Activated naive CD4-positive, alpha-beta T cell treated with anti-CD3 and anti-CD28 coated beads for 36 hours (primary cell): ENCODE measurements at regions of chr12 and their contacts with region 1.

Region 1: GRCh38 chr12:67804168-67804567 is 155.6 kb downstream of the DYRK2 start:
- DNase-seq: peak; percentile 73
- H3K4me3 Mint-ChIP-seq: no peak overlapping the region
- H3K27ac Mint-ChIP-seq: no peak overlapping the region
- H3K4me1 Mint-ChIP-seq: peaks cover 14% of the 10 kb centered on the region
- H3K27me3 Mint-ChIP-seq: no peaks in the 10 kb centered on the region

Region 2: DNA sequence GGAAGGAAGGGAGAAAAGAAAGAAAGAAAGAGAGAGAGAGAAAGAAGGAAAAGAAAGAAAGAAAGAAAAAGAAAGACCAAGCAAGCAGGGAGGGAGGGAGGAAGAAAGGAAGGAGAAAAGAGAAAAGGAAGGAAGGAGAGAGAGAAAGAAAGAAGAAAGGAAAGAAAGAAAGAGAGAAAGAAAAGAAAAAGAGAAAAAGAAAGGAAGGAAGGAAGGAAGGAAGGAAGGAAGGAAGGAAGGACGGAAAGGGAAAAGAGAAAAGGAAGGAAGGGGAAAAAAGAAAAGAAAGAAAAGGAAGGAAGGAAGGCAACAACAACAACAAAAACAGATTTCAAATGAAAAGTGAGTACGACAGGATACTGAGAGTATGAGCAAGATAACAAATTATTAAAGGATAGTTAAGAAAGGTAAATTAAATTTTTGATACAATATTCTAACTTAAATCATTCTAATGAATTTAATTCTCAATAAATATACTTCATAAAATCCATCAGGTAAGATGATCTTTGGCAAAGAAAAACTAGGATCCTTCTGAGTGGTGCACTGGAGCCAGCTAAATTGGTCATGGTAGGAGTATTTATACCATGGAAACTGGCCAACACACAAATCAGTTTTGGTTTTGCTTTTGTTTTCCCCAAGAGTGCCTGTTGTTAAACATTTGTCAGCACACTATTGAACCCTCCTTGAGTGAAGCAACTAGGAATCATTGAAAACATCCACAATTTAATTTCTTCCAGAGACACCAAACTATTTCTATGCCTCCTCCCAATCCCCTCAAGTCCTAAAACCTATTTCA is 211.8 kb before region 1 on chr12:
- CTCF ChIA-PET with region 1: no interaction called
- intact Hi-C with region 1: loop called (anchors 5 kb)
- DNase-seq: peak; percentile 32
- H3K4me3 Mint-ChIP-seq: no peak overlapping the region
- H3K27ac Mint-ChIP-seq: peak overlapping the region; percentile 22
- H3K4me1 Mint-ChIP-seq: peaks cover 49% of the 10 kb centered on the region
- H3K27me3 Mint-ChIP-seq: no peaks in the 10 kb centered on the region

Region 3: DNA sequence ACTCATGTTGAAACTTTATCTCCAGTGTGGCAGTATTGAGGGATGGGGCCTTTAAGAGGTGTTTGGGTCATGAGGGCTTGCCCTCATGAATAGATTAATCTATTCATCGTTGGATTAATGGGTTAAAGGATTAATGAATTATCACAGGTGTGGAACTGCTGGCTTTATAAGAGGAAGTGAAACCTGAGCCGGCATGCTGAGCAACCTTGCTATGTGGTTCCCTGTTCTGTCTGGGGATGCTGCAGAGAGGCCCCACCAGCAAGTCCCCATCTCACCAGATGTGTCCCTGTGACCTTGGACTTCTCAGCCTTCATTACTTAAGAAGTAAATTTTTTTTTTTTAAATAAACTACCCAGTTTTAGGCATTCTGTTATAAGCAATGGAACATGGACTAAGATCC is 46.0 kb before region 1 on chr12:
- CTCF ChIA-PET with region 1: no interaction called
- intact Hi-C with region 1: loop called (anchors 1 kb)
- DNase-seq: peak; percentile 9
- H3K4me3 Mint-ChIP-seq: no peak overlapping the region
- H3K27ac Mint-ChIP-seq: no peak overlapping the region
- H3K4me1 Mint-ChIP-seq: peaks cover 49% of the 10 kb centered on the region
- H3K27me3 Mint-ChIP-seq: no peaks in the 10 kb centered on the region

Region 4: GRCh38 chr12:67827820-67828383 is 23.7 kb after region 1 on chr12:
- CTCF ChIA-PET with region 1: no interaction called
- intact Hi-C with region 1: loop called (anchors 1 kb)
- DNase-seq: peak; percentile 79
- H3K4me3 Mint-ChIP-seq: peak overlapping the region; percentile 30
- H3K27ac Mint-ChIP-seq: peak overlapping the region; percentile 65
- H3K4me1 Mint-ChIP-seq: peaks cover 11% of the 10 kb centered on the region
- H3K27me3 Mint-ChIP-seq: no peaks in the 10 kb centered on the region